Endothelial cell of umbilical vein (primary cell): ENCODE measurements at regions of chr14 and their contacts with region 1.

Region 1: DNA sequence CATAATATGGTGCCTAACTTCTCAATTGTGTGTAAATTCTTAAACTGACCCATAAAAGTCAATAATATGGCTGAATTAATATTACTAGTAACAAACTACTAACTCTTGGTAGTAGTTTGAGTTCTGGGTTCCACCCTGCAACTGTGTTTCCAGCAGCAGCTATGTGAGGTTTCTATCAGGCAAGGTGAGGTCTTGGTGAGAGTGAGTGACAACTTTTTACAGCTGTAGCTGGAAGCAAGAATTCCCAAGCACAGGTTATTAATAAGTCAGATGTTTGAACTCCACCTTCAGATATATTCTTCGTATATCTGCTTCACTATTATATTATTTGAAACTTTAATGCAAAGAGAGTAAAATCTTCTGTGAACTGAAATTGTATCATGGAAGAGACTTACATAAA is 43.8 kb downstream of the MAP4K5 start:
- DNase-seq: no peak
- H3K4me3 ChIP-seq: no peak overlapping the region
- H3K27ac ChIP-seq: no peak overlapping the region
- H3K4me1 ChIP-seq: no peaks in the 10 kb centered on the region
- H3K27me3 ChIP-seq: no peaks in the 10 kb centered on the region
- CTCF ChIP-seq: no peak
- POLR2A ChIP-seq: no peak

Region 2: GRCh38 chr14:50285861-50286260 is 202.7 kb before region 1 on chr14:
- CTCF ChIA-PET with region 1: no interaction called
- POLR2A ChIA-PET with region 1: interaction called, 11 read pairs
- dilution Hi-C with region 1: no loop called
- intact Hi-C with region 1: no loop called
- DNase-seq: no peak
- H3K4me3 ChIP-seq: no peak overlapping the region
- H3K27ac ChIP-seq: no peak overlapping the region
- H3K4me1 ChIP-seq: no peaks in the 10 kb centered on the region
- H3K27me3 ChIP-seq: no peaks in the 10 kb centered on the region
- CTCF ChIP-seq: no peak
- POLR2A ChIP-seq: no peak

Region 3: GRCh38 chr14:50354527-50354926 is 134.0 kb before region 1 on chr14:
- CTCF ChIA-PET with region 1: no interaction called
- POLR2A ChIA-PET with region 1: no interaction called
- dilution Hi-C with region 1: no loop called
- intact Hi-C with region 1: no loop called
- DNase-seq: no peak
- H3K4me3 ChIP-seq: no peak overlapping the region
- H3K27ac ChIP-seq: no peak overlapping the region
- H3K4me1 ChIP-seq: peaks cover 10% of the 10 kb centered on the region
- H3K27me3 ChIP-seq: no peaks in the 10 kb centered on the region
- CTCF ChIP-seq: no peak
- POLR2A ChIP-seq: no peak